IMR-90 (cell line): ENCODE measurements at regions of chr13 and their contacts with region 1.

Region 1: DNA sequence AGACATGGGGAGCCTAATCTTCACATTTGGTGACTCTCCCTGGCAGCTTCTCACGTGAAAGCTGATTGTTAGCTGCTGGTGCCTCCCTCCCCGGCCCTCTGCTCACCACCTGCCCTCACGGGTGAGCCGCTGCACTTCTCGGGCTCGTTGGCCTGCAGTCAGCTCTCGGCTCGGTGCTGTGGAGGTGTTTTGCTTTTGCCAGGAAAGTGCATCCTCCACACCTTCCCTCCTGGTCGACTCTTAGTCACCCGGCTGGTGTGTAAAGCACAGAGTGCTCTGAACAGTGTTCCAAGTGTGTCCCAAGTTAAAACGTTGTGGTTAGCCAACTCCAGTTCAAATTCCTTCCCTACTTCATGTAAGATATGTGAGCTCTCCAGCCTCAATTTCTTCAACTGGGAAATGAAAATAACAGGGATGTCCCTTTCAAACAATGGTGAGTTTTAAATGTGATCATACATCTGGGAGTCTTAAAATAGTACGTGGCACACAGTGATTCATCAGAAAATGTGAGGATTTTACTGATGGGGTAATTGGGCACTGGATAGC is 54.7 kb downstream of the ATP11A start:
- DNase-seq: peak; percentile 63
- ATAC-seq: peak; percentile 41
- H3K4me3 ChIP-seq: no peak overlapping the region
- H3K27ac ChIP-seq: no peak overlapping the region
- H3K4me1 ChIP-seq: peaks cover 19% of the 10 kb centered on the region
- H3K27me3 ChIP-seq: no peaks in the 10 kb centered on the region
- CTCF ChIP-seq: no peak
- POLR2A ChIP-seq: no peak
- RAD21 ChIP-seq: no peak

Region 2: GRCh38 chr13:112762261-112763080 is 17.9 kb after region 1 on chr13:
- CTCF ChIA-PET with region 1: no interaction called
- POLR2A ChIA-PET with region 1: no interaction called
- dilution Hi-C with region 1: no loop called
- in situ Hi-C with region 1: no loop called
- intact Hi-C with region 1: loop called (anchors 1 kb)
- DNase-seq: peak; percentile 80
- ATAC-seq: peak; percentile 71
- H3K4me3 ChIP-seq: no peak overlapping the region
- H3K27ac ChIP-seq: no peak overlapping the region; the same call in 1 of the 2 replicates
- H3K4me1 ChIP-seq: peaks cover 14% of the 10 kb centered on the region
- H3K27me3 ChIP-seq: no peaks in the 10 kb centered on the region
- CTCF ChIP-seq: 0 out of 2 replicates have a peak, but pooled peaks have one; percentile 7
- POLR2A ChIP-seq: no peak
- RAD21 ChIP-seq: peak; percentile 18; the same call in 1 of the 2 replicates